HepG2 (cell line): ENCODE measurements at regions of chr11 and their contacts with region 1.

Region 1: DNA sequence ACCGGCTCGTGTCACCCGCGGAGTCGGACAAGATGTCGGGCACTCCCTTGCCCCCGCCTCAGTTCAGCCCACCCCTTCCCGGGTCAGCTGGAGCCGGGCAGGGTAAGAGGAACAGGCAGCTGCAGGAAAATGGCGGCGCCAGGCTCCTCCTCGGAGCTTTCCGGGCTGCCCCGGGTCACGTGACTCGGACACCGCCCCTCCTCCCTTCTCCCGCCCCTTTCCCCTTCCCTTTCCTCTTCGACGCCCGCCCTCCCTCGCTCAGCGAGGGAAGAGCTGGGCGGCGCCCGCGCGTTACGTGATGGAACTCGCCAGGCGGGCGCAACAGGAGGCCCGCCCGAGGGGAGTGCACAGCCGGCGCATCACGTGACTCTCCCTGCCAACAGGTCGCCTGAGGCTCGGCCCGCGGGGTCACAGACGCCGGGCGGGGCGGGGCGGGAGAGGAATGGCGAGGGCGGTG is at the start of gene PICALM:
- DNase-seq: peak; percentile 96
- ATAC-seq: peak; percentile 92
- H3K4me3 ChIP-seq: peak within 1 kb of the TSS; percentile 83 to 99 (median 84)
- H3K27ac ChIP-seq: peak within 1 kb of the TSS; percentile 86
- H3K4me1 ChIP-seq: peaks cover 32% of the 10 kb centered on the region
- H3K27me3 ChIP-seq: peaks cover 0 to 5% of the 10 kb centered on the region in 2 experiments; a peak in 1 of 5 replicates
- CTCF ChIP-seq: peak; percentile 45
- EP300 ChIP-seq: peak in 1 of 2 experiments; percentile 73; a peak in 2 of 4 replicates
- POLR2A ChIP-seq: peak; percentile 65 to 81
- RAD21 ChIP-seq: peak; percentile 63
- total RNA-seq, gene PICALM: 97.6 and 122 TPM in 2 replicates

Region 2: GRCh38 chr11:85627998-85628770 is 440.8 kb before region 1 on chr11 and contains the start of gene TMEM126B:
- CTCF ChIA-PET with region 1: no interaction called
- POLR2A ChIA-PET with region 1: no interaction called
- in situ Hi-C with region 1: no loop called
- intact Hi-C with region 1: loop called (anchors 10 kb)
- DNase-seq: peak; percentile 95
- ATAC-seq: peak; percentile 99
- H3K4me3 ChIP-seq: peak within 1 kb of the TSS; percentile 79 to 88 (median 81)
- H3K27ac ChIP-seq: peak within 1 kb of the TSS; percentile 79
- H3K4me1 ChIP-seq: peaks cover 27% of the 10 kb centered on the region
- H3K27me3 ChIP-seq: no peaks in the 10 kb centered on the region; a peak in 1 of 5 replicates
- CTCF ChIP-seq: no peak; the same call in 1 of the 2 replicates
- EP300 ChIP-seq: no peak
- POLR2A ChIP-seq: peak; percentile 87 to 93
- RAD21 ChIP-seq: no peak
- total RNA-seq, gene TMEM126B: 54.8 and 81.8 TPM in 2 replicates

Region 3: GRCh38 chr11:85922367-85922766 is 146.6 kb before region 1 on chr11:
- CTCF ChIA-PET with region 1: no interaction called
- POLR2A ChIA-PET with region 1: no interaction called
- in situ Hi-C with region 1: no loop called
- intact Hi-C with region 1: loop called (anchors 5 kb)
- DNase-seq: no peak
- ATAC-seq: no peak
- H3K4me3 ChIP-seq: no peak overlapping the region
- H3K27ac ChIP-seq: peak overlapping the region; percentile 54
- H3K4me1 ChIP-seq: peaks cover 95% of the 10 kb centered on the region
- H3K27me3 ChIP-seq: no peaks in the 10 kb centered on the region
- CTCF ChIP-seq: no peak
- EP300 ChIP-seq: no peak
- POLR2A ChIP-seq: no peak
- RAD21 ChIP-seq: no peak

Region 4: DNA sequence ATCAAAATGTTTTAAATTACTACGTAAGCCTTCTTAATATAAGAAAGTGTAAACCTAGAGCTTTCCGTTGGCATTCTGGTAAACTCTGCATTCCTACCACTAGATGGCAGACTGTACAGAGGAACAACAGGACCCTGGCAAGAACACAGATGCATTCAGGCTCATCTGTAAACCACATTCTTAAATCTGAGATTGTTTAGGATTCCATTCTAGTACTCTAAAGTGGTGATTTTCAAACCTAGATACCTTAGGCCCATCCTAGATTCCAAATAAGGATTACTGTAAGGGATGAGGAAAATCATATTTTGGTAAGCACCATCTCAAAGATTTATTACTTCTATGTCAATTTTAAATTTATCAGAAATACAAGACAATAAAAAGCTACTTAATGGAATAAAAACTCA is 27.0 kb before region 1 on chr11:
- CTCF ChIA-PET with region 1: no interaction called
- POLR2A ChIA-PET with region 1: interaction called, 6 read pairs
- in situ Hi-C with region 1: no loop called
- intact Hi-C with region 1: loop called (anchors 2 kb)
- DNase-seq: peak; percentile 77
- ATAC-seq: peak; percentile 74
- H3K4me3 ChIP-seq: no peak overlapping the region
- H3K27ac ChIP-seq: no peak overlapping the region
- H3K4me1 ChIP-seq: peaks cover 24% of the 10 kb centered on the region
- H3K27me3 ChIP-seq: no peaks in the 10 kb centered on the region
- CTCF ChIP-seq: peak; percentile 84
- EP300 ChIP-seq: no peak
- POLR2A ChIP-seq: no peak
- RAD21 ChIP-seq: peak; percentile 66

Region 5: GRCh38 chr11:86193297-86194095 is 124.5 kb after region 1 on chr11:
- CTCF ChIA-PET with region 1: no interaction called
- POLR2A ChIA-PET with region 1: interaction called, 7 read pairs
- in situ Hi-C with region 1: no loop called
- intact Hi-C with region 1: loop called (anchors 2 kb)
- DNase-seq: peak; percentile 76
- ATAC-seq: peak; percentile 100
- H3K4me3 ChIP-seq: peak overlapping the region in 2 of 3 experiments; percentile 21; a peak in 2 of 6 replicates
- H3K27ac ChIP-seq: no peak overlapping the region
- H3K4me1 ChIP-seq: peaks cover 9% of the 10 kb centered on the region; the same call in 1 of the 2 replicates
- H3K27me3 ChIP-seq: no peaks in the 10 kb centered on the region
- CTCF ChIP-seq: peak; percentile 85
- EP300 ChIP-seq: no peak
- POLR2A ChIP-seq: no peak
- RAD21 ChIP-seq: peak; percentile 65; the same call in 1 of the 2 replicates

Region 6: DNA sequence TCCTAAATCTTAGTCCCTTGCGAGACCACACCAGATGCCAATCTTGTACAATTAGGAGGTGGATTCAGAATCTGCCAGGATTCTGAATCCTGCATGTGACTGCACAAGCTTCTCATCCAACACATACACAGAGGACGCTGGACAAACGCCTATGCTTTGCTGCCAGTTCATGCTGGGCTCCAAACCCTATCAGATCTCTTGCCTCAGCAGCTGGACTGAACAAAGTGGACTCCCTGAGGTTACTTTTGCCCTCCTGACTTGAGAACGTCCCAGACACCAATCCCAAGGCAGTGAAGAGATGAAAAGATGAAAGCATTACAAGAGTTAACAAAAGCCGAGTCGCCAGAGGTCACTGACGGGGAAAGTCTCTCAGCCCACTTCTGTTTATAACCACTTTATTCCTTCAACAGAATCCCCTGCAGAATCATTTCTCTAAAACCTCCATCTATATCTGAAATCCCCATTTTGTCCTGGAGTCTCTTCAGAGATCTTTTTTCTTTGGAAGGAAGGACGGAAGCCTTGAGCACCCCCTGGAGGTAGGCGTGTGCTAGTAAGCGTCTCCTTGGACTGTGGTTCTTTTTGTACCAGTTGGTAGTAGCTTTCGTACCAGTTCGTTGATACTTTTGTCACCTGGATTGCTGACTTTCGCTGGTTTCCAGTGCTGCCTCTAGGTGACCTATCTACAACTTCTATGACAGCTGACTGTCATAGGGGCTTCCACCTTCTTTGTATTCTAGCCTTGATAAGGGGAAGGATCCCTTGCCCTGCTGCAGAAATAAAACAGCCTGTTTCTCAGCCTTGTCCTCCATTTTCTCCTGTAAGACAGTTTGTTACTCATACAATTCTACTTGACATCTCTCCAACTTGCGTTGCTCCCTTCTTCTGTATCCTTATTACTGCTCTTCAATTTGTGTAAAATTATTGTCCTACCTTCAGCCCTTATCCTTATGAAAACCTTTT is 149.4 kb after region 1 on chr11:
- CTCF ChIA-PET with region 1: no interaction called
- POLR2A ChIA-PET with region 1: interaction called, 3 read pairs
- in situ Hi-C with region 1: no loop called
- intact Hi-C with region 1: loop called (anchors 1 kb)
- DNase-seq: peak; percentile 64
- ATAC-seq: peak; percentile 96
- H3K4me3 ChIP-seq: peak overlapping the region in 2 of 3 experiments; percentile 24 to 31; a peak in 4 of 6 replicates
- H3K27ac ChIP-seq: no peak overlapping the region
- H3K4me1 ChIP-seq: peaks cover 13% of the 10 kb centered on the region
- H3K27me3 ChIP-seq: no peaks in the 10 kb centered on the region; a peak in 2 of 5 replicates
- CTCF ChIP-seq: peak; percentile 83
- EP300 ChIP-seq: no peak
- POLR2A ChIP-seq: no peak
- RAD21 ChIP-seq: peak; percentile 77

Region 7: DNA sequence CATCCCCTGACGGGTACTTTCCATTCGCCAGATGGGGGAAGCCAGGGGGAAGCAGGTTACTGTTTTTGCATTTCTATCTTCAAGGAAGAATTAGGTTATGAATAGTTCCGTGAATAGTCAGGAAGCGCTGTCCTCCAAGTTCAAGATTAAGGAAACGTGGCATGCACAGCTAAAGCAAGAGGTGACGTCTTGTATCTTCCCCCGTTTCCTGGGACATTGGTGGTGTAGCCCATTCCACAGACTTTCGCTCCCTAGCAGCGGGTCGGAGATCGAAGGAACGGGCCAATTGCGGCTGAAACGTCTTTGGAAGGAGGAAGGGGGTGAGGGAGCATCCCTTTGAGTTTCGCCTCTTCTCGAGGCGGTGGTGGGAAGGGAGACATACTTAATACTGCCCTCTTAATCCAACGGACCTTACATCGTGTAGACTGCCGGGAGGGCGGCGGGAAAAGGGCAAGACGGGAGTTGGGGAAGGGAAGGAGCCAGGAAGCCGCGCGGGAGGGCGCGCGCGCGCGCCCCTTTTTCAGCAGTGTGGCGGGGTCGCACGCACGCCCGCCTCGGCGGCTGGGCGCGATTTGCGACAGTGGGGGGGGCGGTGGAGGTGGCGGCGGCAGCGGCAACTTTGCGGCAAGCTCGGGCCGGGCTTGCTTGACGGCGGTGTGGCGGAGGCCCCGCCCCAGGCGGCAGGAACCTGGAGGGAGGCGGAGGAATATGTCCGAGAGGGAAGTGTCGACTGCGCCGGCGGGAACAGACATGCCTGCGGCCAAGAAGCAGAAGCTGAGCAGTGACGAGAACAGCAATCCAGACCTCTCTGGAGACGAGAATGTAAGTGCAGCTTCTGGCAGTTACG is 175.8 kb after region 1 on chr11 and contains the start of gene EED:
- CTCF ChIA-PET with region 1: no interaction called
- POLR2A ChIA-PET with region 1: interaction called, 11 read pairs
- in situ Hi-C with region 1: no loop called
- intact Hi-C with region 1: no loop called
- DNase-seq: peak; percentile 88
- ATAC-seq: peak; percentile 95
- H3K4me3 ChIP-seq: peak within 1 kb of the TSS; percentile 72 to 96 (median 95)
- H3K27ac ChIP-seq: peak within 1 kb of the TSS; percentile 98
- H3K4me1 ChIP-seq: peaks cover 50% of the 10 kb centered on the region
- H3K27me3 ChIP-seq: no peaks in the 10 kb centered on the region; a peak in 2 of 5 replicates
- CTCF ChIP-seq: 0 out of 2 replicates have a peak, but pooled peaks have one; percentile 2
- EP300 ChIP-seq: no peak
- POLR2A ChIP-seq: peak; percentile 85 to 86
- RAD21 ChIP-seq: no peak
- total RNA-seq, gene EED: 28.4 and 39.7 TPM in 2 replicates